Heart right ventricle (tissue), 16 donors: ENCODE measurements at regions of chr2 and their contacts with region 1.

Region 1: GRCh38 chr2:218301176-218301819 is 9.0 kb upstream of the TMBIM1 start:
- DNase-seq: peak; percentile 64 to 89
- ATAC-seq: peak; percentile 68 to 90 (median 82)
- H3K4me3 ChIP-seq: no peak overlapping the region
- H3K27ac ChIP-seq: peak overlapping the region in 1 of 10 donors; percentile 23
- H3K4me1 ChIP-seq: peaks cover 0 to 7% (median 0%) of the 10 kb centered on the region in 9 donors
- H3K27me3 ChIP-seq: no peaks in the 10 kb centered on the region
- CTCF ChIP-seq: peak; percentile 96 to 100 (median 97)

Region 2: GRCh38 chr2:218354850-218355443 is 53.6 kb after region 1 on chr2:
- intact Hi-C with region 1: loop called (anchors 1 to 5 kb)
- DNase-seq: no peak
- ATAC-seq: no peak
- H3K4me3 ChIP-seq: no peak overlapping the region
- H3K27ac ChIP-seq: no peak overlapping the region
- H3K4me1 ChIP-seq: peaks cover 0 to 13% (median 0%) of the 10 kb centered on the region in 9 donors
- H3K27me3 ChIP-seq: no peaks in the 10 kb centered on the region
- CTCF ChIP-seq: no peak

Region 3: GRCh38 chr2:218360447-218360846 is 59.1 kb after region 1 on chr2:
- intact Hi-C with region 1: loop called (anchors 1 to 5 kb)
- DNase-seq: no peak
- ATAC-seq: peak in 6 of 8 donors; percentile 27 to 66 (median 43)
- H3K4me3 ChIP-seq: no peak overlapping the region
- H3K27ac ChIP-seq: peak overlapping the region in 1 of 10 donors; percentile 86
- H3K4me1 ChIP-seq: peaks cover 0 to 51% (median 0%) of the 10 kb centered on the region in 9 donors
- H3K27me3 ChIP-seq: no peaks in the 10 kb centered on the region
- CTCF ChIP-seq: no peak

Region 4: GRCh38 chr2:218466016-218466521 is 164.8 kb after region 1 on chr2:
- intact Hi-C with region 1: loop called in 8 of 10 experiments (anchors 1 to 10 kb)
- DNase-seq: no peak
- ATAC-seq: peak in 3 of 8 donors; percentile 37 to 53 (median 44)
- H3K4me3 ChIP-seq: no peak overlapping the region
- H3K27ac ChIP-seq: no peak overlapping the region
- H3K4me1 ChIP-seq: peaks cover 0 to 8% (median 0%) of the 10 kb centered on the region in 9 donors
- H3K27me3 ChIP-seq: no peaks in the 10 kb centered on the region
- CTCF ChIP-seq: peak in 8 of 9 donors; percentile 30 to 68 (median 60)